ENCODE measurements at regions of chr9 and their contacts with region 1.

Region 1: GRCh38 chr9:21802195-21803000 is at the start of gene MTAP:
- DNase-seq: peak; percentile 93 to 96 (median 93)
- ATAC-seq: peak; percentile 94 to 99 (median 98)
- H3K4me3 ChIP-seq: peak within 1 kb of the TSS; percentile 64 to 96 (median 82)
- H3K27ac ChIP-seq: peak within 1 kb of the TSS; percentile 79 to 95 (median 86)
- H3K4me1 ChIP-seq: peaks cover 0 to 37% (median 26%) of the 10 kb centered on the region in 12 donors
- H3K27me3 ChIP-seq: peaks cover 0 to 11% (median 0%) of the 10 kb centered on the region in 9 donors
- CTCF ChIP-seq: no peak
- POLR2A ChIP-seq: peak in 1 of 2 donors; percentile 90
- total RNA-seq, gene MTAP: 12.6 to 27.3 (median 19.4) TPM

Region 2: GRCh38 chr9:21744841-21745240 is 57.6 kb before region 1 on chr9:
- intact Hi-C with region 1: no loop called
- DNase-seq: no peak
- ATAC-seq: peak in 2 of 4 donors; percentile 50 to 68
- H3K4me3 ChIP-seq: no peak overlapping the region
- H3K27ac ChIP-seq: no peak overlapping the region
- H3K4me1 ChIP-seq: peaks cover 0 to 13% (median 0%) of the 10 kb centered on the region in 12 donors
- H3K27me3 ChIP-seq: peaks cover 0 to 9% (median 0%) of the 10 kb centered on the region in 9 donors
- CTCF ChIP-seq: no peak
- POLR2A ChIP-seq: no peak

Region 3: DNA sequence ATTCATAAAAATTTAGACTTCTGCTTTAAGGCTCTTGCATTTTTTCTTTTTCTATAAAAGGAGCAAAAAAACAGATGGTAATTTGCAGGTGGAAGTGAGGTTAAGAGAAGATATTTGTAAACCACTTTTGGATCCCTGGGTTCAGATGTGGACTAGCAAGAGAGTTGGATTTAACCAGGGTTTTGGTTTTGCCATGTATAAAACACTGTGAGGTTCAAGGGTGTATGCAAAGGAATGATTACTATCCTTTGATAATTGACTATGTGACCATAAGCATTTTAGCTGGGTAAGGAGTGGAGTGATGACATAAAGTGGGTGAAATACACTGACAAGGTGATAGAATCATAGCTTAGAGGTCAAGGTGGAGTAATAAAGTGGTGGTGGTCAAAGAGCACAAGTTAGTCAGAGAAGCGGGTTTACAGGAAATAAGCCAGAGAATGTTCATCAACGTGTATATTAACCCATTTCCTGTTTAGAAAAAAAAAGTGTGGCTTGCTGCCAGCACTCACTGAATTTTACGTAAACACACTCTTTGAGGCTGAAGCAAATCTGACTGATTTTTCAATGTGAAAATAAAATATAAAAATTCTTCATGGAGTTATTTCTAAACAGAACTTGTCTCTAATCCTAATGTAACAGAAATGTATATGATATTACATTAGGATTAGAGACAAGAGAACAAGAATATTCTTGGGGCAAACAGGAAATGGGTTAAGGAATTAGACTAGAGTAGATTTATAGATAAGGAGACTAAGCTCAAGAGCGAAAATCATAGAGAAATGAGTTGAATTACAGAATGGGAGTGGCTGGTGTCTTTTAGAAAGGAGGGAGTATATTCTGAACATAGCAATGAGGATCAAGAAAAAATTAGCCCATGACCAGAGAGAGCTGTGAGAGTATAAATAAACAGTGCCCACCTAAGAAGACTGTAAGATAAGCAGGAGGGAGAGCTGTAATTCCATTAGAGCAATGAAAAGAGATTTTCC is 117.3 kb after region 1 on chr9:
- intact Hi-C with region 1: no loop called
- DNase-seq: no peak
- ATAC-seq: no peak
- H3K4me3 ChIP-seq: no peak overlapping the region
- H3K27ac ChIP-seq: peak overlapping the region in 1 of 12 donors; percentile 12
- H3K4me1 ChIP-seq: peaks cover 0 to 13% (median 0%) of the 10 kb centered on the region in 12 donors
- H3K27me3 ChIP-seq: no peaks in the 10 kb centered on the region
- CTCF ChIP-seq: no peak
- POLR2A ChIP-seq: no peak

Region 4: GRCh38 chr9:21974548-21975409 is 172.4 kb after region 1 on chr9:
- intact Hi-C with region 1: no loop called
- DNase-seq: peak in 1 of 5 donors; percentile 26
- ATAC-seq: peak in 3 of 4 donors; percentile 61 to 68 (median 61)
- H3K4me3 ChIP-seq: peak overlapping the region; percentile 21 to 53 (median 44)
- H3K27ac ChIP-seq: no peak overlapping the region
- H3K4me1 ChIP-seq: peaks cover 0 to 26% (median 13%) of the 10 kb centered on the region in 12 donors
- H3K27me3 ChIP-seq: peaks cover 61 to 100% (median 100%) of the 10 kb centered on the region in 9 donors
- CTCF ChIP-seq: no peak
- POLR2A ChIP-seq: no peak

Region 5: GRCh38 chr9:22452415-22453010 is 650.1 kb after region 1 on chr9:
- intact Hi-C with region 1: loop called in 2 of 10 experiments (anchors 10 kb)
- DNase-seq: peak in 2 of 5 donors; percentile 29 to 51
- ATAC-seq: peak in 1 of 4 donors; percentile 53
- H3K4me3 ChIP-seq: no peak overlapping the region
- H3K27ac ChIP-seq: no peak overlapping the region
- H3K4me1 ChIP-seq: peaks cover 0 to 6% (median 0%) of the 10 kb centered on the region in 12 donors
- H3K27me3 ChIP-seq: peaks cover 0 to 17% (median 0%) of the 10 kb centered on the region in 9 donors
- CTCF ChIP-seq: peak; percentile 54 to 85 (median 76)
- POLR2A ChIP-seq: no peak

Measured in heart left ventricle (tissue), 16 donors.